Tibial artery (tissue), 4 donors: ENCODE measurements at regions of chr17 and their contacts with region 1.

Region 1: DNA sequence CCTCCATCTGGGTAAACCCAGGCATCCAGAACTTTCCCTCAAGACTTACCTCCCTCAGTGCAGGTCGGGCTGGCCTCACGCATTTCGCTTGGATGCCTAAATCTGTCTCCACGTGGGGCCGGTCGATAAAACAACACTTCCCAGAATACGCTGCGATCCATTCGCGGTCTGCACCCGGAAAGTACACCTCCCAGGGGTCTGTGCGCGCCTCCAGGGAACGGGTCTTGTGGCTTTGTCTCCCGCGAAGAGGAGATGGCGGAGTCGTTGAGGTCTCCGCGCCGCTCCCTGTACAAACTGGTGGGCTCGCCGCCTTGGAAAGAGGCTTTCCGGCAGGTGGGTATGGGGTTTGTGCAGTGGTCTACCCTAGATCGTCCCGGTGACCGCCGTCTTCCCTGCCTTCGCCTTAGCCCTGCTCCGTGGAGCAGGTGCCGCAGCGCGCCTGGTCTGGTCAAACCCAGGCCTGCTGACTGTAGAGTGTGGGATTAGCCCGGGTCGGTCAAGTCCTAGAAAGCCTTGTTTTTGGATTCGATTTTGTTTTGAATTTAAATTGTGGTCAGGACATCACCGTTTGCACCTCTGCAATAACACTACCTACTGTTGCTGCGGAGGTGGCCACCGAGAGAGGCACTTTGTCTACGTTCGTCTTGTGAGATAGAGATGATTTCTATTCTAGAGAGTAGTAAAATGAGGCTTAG is at the start of gene RPAIN:
- DNase-seq: peak; percentile 90 to 93
- H3K4me3 ChIP-seq: peak within 1 kb of the TSS; percentile 70 to 78
- H3K27ac ChIP-seq: peak within 1 kb of the TSS; percentile 88 to 93
- H3K4me1 ChIP-seq: peaks cover 0 to 37% (median 32%) of the 10 kb centered on the region in 4 donors
- H3K27me3 ChIP-seq: no peaks in the 10 kb centered on the region
- CTCF ChIP-seq: no peak

Region 2: GRCh38 chr17:5486204-5487124 is 66.4 kb after region 1 on chr17 and contains the start of gene MIS12:
- intact Hi-C with region 1: loop called (anchors 5 kb)
- DNase-seq: peak; percentile 99
- H3K4me3 ChIP-seq: peak within 1 kb of the TSS; percentile 78 to 95
- H3K27ac ChIP-seq: peak within 1 kb of the TSS; percentile 95 to 98
- H3K4me1 ChIP-seq: peaks cover 0 to 31% (median 28%) of the 10 kb centered on the region in 4 donors
- H3K27me3 ChIP-seq: no peaks in the 10 kb centered on the region
- CTCF ChIP-seq: no peak